SK-N-SH (cell line): ENCODE measurements at regions of chr1 and their contacts with region 1.

Region 1: GRCh38 chr1:99180343-99180808 is 83.9 kb upstream of the PLPPR4 start:
- DNase-seq: peak; percentile 25
- H3K4me3 ChIP-seq: no peak overlapping the region
- H3K27ac ChIP-seq: peak overlapping the region; percentile 63 to 98; a peak in 3 of 4 replicates
- H3K4me1 ChIP-seq: peaks cover 11 to 26% of the 10 kb centered on the region in 2 experiments
- H3K27me3 ChIP-seq: no peaks in the 10 kb centered on the region
- CTCF ChIP-seq: peak; percentile 89
- EP300 ChIP-seq: no peak
- RAD21 ChIP-seq: peak; percentile 96

Region 2: GRCh38 chr1:99146129-99146851 is 34.1 kb before region 1 on chr1:
- CTCF ChIA-PET with region 1: no interaction called
- POLR2A ChIA-PET with region 1: no interaction called
- DNase-seq: no peak
- H3K4me3 ChIP-seq: no peak overlapping the region
- H3K27ac ChIP-seq: no peak overlapping the region
- H3K4me1 ChIP-seq: no peaks in the 10 kb centered on the region; a peak in 1 of 4 replicates
- H3K27me3 ChIP-seq: no peaks in the 10 kb centered on the region; the same call in 1 of the 2 replicates
- CTCF ChIP-seq: no peak
- EP300 ChIP-seq: no peak
- RAD21 ChIP-seq: no peak

Region 3: DNA sequence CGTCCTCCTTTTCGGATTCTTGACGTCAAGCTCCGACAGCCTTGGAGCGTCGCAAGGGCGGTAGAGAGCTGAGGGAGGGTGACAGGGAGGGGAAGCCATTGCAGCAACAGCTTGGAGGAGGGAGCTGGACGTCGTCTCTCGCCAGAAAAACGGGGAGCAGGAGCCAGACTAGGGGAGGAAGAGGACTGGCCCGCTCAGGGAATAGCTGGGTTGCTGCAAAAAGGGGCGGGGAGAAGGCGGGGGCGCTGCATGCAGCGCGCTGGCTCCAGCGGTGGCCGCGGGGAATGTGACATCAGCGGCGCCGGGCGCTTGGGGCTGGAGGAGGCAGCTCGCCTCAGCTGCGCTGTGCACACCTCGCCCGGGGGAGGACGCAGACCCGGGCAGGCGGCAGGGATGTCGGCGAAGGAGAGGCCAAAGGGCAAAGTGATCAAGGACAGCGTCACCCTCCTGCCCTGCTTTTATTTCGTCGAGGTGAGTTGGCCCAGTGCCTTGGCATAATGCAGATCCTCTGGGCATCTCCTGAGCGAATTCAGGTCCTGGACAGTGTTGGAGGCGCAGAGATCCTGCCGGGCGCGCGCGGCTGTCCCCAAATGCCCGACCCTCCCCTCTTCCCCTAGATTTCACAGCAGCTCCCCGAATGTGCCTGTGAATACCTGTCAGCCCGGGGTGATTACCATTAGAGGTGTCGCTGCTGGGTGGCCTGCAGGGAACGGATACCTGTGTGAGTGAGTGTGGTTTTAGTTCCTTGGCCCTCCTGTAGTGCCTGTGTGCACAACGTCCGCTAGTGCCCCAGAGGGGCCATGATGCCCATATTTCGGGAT is 84.0 kb after region 1 on chr1 and contains the start of gene PLPPR4:
- CTCF ChIA-PET with region 1: interaction called, 12 read pairs
- POLR2A ChIA-PET with region 1: interaction called, 10 read pairs
- DNase-seq: peak; percentile 85
- H3K4me3 ChIP-seq: peak within 1 kb of the TSS; percentile 58 to 60
- H3K27ac ChIP-seq: peak within 1 kb of the TSS in 1 of 2 experiments; percentile 90; a peak in 2 of 4 replicates
- H3K4me1 ChIP-seq: peaks cover 0 to 8% of the 10 kb centered on the region in 2 experiments; a peak in 3 of 4 replicates
- H3K27me3 ChIP-seq: peaks cover 15% of the 10 kb centered on the region; the same call in 1 of the 2 replicates
- CTCF ChIP-seq: no peak
- EP300 ChIP-seq: no peak
- RAD21 ChIP-seq: peak; percentile 30; the same call in 1 of the 2 replicates
- polyA plus RNA-seq, gene PLPPR4: 0.61 and 2.1 TPM in 2 replicates

Region 4: GRCh38 chr1:99526926-99527477 is 346.6 kb after region 1 on chr1:
- CTCF ChIA-PET with region 1: interaction called, 18 read pairs
- POLR2A ChIA-PET with region 1: no interaction called
- DNase-seq: peak; percentile 8
- H3K4me3 ChIP-seq: no peak overlapping the region
- H3K27ac ChIP-seq: no peak overlapping the region; a peak in 1 of 4 replicates
- H3K4me1 ChIP-seq: peaks cover 0 to 3% of the 10 kb centered on the region in 2 experiments; a peak in 2 of 4 replicates
- H3K27me3 ChIP-seq: no peaks in the 10 kb centered on the region
- CTCF ChIP-seq: peak; percentile 58
- EP300 ChIP-seq: no peak
- RAD21 ChIP-seq: peak; percentile 68